Ascending aorta (tissue), 2 donors: ENCODE measurements at regions of chr15 and their contacts with region 1.

Region 1: DNA sequence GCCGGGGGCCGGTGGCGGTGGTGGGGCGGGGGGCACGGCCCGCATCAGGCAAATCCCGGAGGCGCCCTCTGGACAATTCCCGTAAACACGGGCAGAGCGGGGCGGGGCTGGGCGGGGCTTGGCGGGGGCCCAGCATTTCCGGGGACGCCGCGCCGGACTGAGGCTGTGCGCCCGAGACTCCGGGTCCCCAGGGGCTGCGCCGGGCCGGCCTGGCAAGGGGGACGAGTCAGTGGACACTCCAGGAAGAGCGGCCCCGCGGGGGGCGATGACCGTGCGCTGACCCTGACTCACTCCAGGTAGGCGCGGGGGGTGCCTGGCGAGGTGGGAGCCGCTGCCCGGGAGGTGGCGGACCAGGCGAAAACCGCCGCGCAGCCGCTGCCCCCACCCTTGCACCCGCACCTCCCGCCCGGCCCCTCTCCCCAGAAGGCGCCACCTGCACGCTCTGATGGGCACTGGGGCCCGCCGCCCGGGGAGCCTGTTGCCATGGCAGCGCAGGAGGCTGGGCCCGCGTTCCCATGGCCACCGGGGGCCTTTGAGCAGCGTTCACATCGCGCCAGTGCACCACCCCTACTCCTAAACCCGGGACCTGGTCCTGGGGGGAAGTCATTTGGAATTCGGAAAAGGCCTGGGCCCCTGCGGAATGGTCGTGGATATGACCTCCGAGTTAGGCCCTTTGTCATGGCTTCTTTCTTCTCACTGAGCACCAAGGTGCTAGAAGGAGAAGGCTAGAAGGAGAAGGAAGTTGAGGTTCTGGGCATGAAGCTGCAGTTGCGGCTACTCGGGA is 16.2 kb upstream of the SEMA4B start:
- DNase-seq: peak in 1 of 2 donors; percentile 84
- H3K4me3 ChIP-seq: peak overlapping the region; percentile 84 to 87
- H3K27ac ChIP-seq: peak overlapping the region; percentile 90
- H3K4me1 ChIP-seq: peaks cover 3 to 11% of the 10 kb centered on the region in 2 donors
- H3K27me3 ChIP-seq: no peaks in the 10 kb centered on the region
- CTCF ChIP-seq: no peak

Region 2: GRCh38 chr15:90201130-90201949 is 16.4 kb after region 1 on chr15 and contains the start of gene SEMA4B:
- intact Hi-C with region 1: loop called (anchors 2 kb)
- DNase-seq: peak in 1 of 2 donors; percentile 84
- H3K4me3 ChIP-seq: peak within 1 kb of the TSS; percentile 66 to 93
- H3K27ac ChIP-seq: peak within 1 kb of the TSS; percentile 68 to 70
- H3K4me1 ChIP-seq: peaks cover 8 to 12% of the 10 kb centered on the region in 2 donors
- H3K27me3 ChIP-seq: no peaks in the 10 kb centered on the region
- CTCF ChIP-seq: no peak
- total RNA-seq, gene SEMA4B: 51.2 TPM